ENCODE measurements at regions of chr18 and their contacts with region 1.

Region 1: DNA sequence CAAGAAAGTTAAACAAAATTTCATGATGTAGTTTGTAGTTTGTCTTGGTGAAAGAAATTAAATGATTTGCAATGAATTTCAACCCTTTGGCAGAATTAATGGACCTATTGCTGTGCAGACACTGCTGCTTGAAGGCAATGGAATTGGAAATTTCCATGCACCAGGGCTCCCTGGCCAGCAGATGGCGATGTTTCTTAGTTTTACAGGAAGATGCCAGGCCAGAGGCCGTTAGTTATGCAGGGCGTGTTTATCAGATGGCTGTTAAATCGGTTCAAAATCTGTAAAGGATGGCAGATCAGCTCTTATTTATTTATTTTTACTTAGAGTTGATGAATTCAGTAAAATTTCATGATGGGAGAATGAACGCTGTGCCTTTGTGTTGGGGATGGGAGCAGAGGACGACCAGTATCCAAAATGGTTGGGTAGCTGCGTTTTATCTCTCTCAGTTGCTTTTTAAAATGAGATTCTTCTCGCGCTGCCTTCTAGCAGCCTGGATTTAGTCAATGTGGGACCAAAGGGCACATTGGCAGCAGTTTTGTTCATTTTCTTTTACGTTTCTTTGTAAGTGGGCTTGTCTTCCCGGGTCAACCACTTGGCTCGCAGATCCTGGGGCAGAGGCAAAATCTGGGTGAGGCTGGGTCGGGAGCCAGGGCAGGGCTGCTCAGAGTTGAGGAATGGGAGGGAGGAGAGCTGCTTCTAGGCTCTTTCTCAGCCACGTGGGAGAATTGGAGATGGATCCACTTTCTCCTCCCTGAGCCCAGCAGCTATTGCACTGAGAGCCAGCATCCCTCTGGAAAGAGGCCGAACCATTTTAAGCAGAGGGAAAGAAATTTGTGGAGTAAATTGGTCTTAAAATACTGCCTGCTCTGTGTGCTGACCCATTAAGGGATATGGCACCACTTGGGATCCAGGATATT is 344.0 kb downstream of the PIK3C3 start:
- DNase-seq: peak; percentile 50 to 70
- H3K4me3 ChIP-seq: no peak overlapping the region
- H3K4me3 Mint-ChIP-seq: no peak overlapping the region
- H3K27ac Mint-ChIP-seq: no peak overlapping the region
- H3K4me1 ChIP-seq: no peaks in the 10 kb centered on the region
- H3K4me1 Mint-ChIP-seq: no peaks in the 10 kb centered on the region
- H3K27me3 ChIP-seq: no peaks in the 10 kb centered on the region
- H3K27me3 Mint-ChIP-seq: no peaks in the 10 kb centered on the region
- CTCF ChIP-seq: peak; percentile 53 to 59

Region 2: GRCh38 chr18:42288129-42288528 is 10.9 kb before region 1 on chr18:
- CTCF ChIA-PET with region 1: no interaction called
- POLR2A ChIA-PET with region 1: no interaction called
- intact Hi-C with region 1: no loop called
- DNase-seq: no peak
- H3K4me3 ChIP-seq: no peak overlapping the region
- H3K4me3 Mint-ChIP-seq: no peak overlapping the region
- H3K27ac Mint-ChIP-seq: no peak overlapping the region
- H3K4me1 ChIP-seq: no peaks in the 10 kb centered on the region
- H3K4me1 Mint-ChIP-seq: no peaks in the 10 kb centered on the region
- H3K27me3 ChIP-seq: no peaks in the 10 kb centered on the region
- H3K27me3 Mint-ChIP-seq: no peaks in the 10 kb centered on the region
- CTCF ChIP-seq: no peak

Region 3: GRCh38 chr18:42730272-42730671 is 431.3 kb after region 1 on chr18:
- CTCF ChIA-PET with region 1: no interaction called
- POLR2A ChIA-PET with region 1: no interaction called
- intact Hi-C with region 1: loop called (anchors 1 kb)
- DNase-seq: peak in 1 of 2 experiments; percentile 3
- H3K4me3 ChIP-seq: no peak overlapping the region
- H3K4me3 Mint-ChIP-seq: no peak overlapping the region
- H3K27ac Mint-ChIP-seq: no peak overlapping the region
- H3K4me1 ChIP-seq: no peaks in the 10 kb centered on the region
- H3K4me1 Mint-ChIP-seq: no peaks in the 10 kb centered on the region
- H3K27me3 ChIP-seq: no peaks in the 10 kb centered on the region
- H3K27me3 Mint-ChIP-seq: no peaks in the 10 kb centered on the region
- CTCF ChIP-seq: no peak

Region 4: DNA sequence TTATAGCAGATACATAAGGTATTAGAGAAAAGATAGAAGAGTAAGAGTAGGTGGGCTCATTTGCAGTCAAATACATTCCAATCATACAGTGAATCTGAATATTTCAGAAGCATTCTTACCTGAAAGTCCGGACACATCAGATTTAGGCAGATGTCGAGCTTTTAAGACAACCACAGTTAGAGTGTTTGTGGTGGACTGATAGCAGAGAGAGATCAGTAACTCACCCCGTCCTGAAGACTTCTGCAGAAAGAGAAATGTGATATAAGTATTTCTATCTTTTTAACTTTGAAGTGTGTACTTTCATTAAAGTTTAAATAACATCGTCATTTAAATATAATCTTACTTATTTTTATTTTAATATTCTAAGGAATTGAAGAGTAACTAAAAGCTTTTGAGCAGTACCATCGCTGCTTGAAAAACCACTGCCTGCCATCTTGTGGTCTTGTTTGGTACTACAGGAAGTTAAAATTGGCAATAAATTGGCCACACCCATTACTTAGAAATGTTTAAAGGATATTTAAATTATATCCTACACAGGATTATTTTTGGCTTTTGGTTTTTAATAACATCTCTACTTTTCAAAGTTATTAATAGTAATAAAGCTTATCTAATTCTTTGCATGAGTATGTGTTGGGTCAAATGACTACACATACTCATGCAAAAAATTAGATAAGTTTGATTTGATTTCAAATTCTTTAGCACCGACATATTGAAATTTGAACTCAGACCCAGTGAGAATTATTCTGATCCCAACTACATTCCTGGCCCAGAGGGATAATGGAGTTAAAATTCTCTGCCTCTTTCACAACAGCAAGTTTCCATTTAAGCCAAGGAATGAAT is 972.8 kb after region 1 on chr18:
- CTCF ChIA-PET with region 1: no interaction called
- POLR2A ChIA-PET with region 1: no interaction called
- intact Hi-C with region 1: loop called (anchors 5 kb)
- DNase-seq: peak in 1 of 2 experiments; percentile 28
- H3K4me3 ChIP-seq: no peak overlapping the region
- H3K4me3 Mint-ChIP-seq: no peak overlapping the region
- H3K27ac Mint-ChIP-seq: no peak overlapping the region
- H3K4me1 ChIP-seq: no peaks in the 10 kb centered on the region
- H3K4me1 Mint-ChIP-seq: no peaks in the 10 kb centered on the region
- H3K27me3 ChIP-seq: no peaks in the 10 kb centered on the region
- H3K27me3 Mint-ChIP-seq: peaks cover 3% of the 10 kb centered on the region
- CTCF ChIP-seq: peak; percentile 30 to 35

Region 5: GRCh38 chr18:43405097-43405496 is 1106.1 kb after region 1 on chr18:
- CTCF ChIA-PET with region 1: no interaction called
- POLR2A ChIA-PET with region 1: no interaction called
- intact Hi-C with region 1: loop called (anchors 10 kb)
- DNase-seq: no peak
- H3K4me3 ChIP-seq: no peak overlapping the region
- H3K4me3 Mint-ChIP-seq: no peak overlapping the region
- H3K27ac Mint-ChIP-seq: no peak overlapping the region
- H3K4me1 ChIP-seq: no peaks in the 10 kb centered on the region
- H3K4me1 Mint-ChIP-seq: no peaks in the 10 kb centered on the region
- H3K27me3 ChIP-seq: no peaks in the 10 kb centered on the region
- H3K27me3 Mint-ChIP-seq: no peaks in the 10 kb centered on the region
- CTCF ChIP-seq: no peak

Measured in Caco-2 (cell line).